ENCODE measurements at regions of chr19 and their contacts with region 1.

Region 1: GRCh38 chr19:39557441-39558151 is 17.6 kb upstream of the EID2 start:
- DNase-seq: no peak
- H3K4me3 Mint-ChIP-seq: peak overlapping the region; percentile 37
- H3K27ac Mint-ChIP-seq: peak overlapping the region; percentile 80
- H3K4me1 Mint-ChIP-seq: peaks cover 26% of the 10 kb centered on the region
- H3K27me3 Mint-ChIP-seq: no peaks in the 10 kb centered on the region

Region 2: DNA sequence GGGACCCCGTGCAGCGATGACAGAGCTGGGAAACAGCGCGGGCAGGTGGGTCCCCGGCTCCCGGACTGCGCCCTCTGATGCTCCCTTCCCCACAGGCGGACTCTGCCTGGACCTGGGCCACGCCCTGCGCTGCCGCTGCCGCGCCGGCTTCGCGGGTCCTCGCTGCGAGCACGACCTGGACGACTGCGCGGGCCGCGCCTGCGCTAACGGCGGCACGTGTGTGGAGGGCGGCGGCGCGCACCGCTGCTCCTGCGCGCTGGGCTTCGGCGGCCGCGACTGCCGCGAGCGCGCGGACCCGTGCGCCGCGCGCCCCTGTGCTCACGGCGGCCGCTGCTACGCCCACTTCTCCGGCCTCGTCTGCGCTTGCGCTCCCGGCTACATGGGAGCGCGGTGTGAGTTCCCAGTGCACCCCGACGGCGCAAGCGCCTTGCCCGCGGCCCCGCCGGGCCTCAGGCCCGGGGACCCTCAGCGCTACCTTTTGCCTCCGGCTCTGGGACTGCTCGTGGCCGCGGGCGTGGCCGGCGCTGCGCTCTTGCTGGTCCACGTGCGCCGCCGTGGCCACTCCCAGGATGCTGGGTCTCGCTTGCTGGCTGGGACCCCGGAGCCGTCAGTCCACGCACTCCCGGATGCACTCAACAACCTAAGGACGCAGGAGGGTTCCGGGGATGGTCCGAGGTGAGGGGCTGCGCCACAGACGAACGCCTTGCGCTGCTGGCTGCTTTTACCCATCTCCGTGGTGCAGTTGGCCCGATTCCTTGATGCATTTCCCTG is 50.5 kb before region 1 on chr19:
- CTCF ChIA-PET with region 1: no interaction called
- POLR2A ChIA-PET with region 1: no interaction called
- intact Hi-C with region 1: no loop called
- DNase-seq: peak; percentile 70
- H3K4me3 Mint-ChIP-seq: peak overlapping the region; percentile 73
- H3K27ac Mint-ChIP-seq: no peak overlapping the region
- H3K4me1 Mint-ChIP-seq: peaks cover 22% of the 10 kb centered on the region
- H3K27me3 Mint-ChIP-seq: peaks cover 40% of the 10 kb centered on the region

Region 3: GRCh38 chr19:39546599-39546998 is 11.0 kb before region 1 on chr19:
- CTCF ChIA-PET with region 1: interaction called, 10 read pairs
- POLR2A ChIA-PET with region 1: no interaction called
- intact Hi-C with region 1: no loop called
- DNase-seq: peak; percentile 34
- H3K4me3 Mint-ChIP-seq: no peak overlapping the region
- H3K27ac Mint-ChIP-seq: no peak overlapping the region
- H3K4me1 Mint-ChIP-seq: peaks cover 41% of the 10 kb centered on the region
- H3K27me3 Mint-ChIP-seq: no peaks in the 10 kb centered on the region

Region 4: GRCh38 chr19:39582891-39583625 is 25.5 kb after region 1 on chr19:
- CTCF ChIA-PET with region 1: interaction called, 3 read pairs
- POLR2A ChIA-PET with region 1: interaction called, 3 read pairs
- intact Hi-C with region 1: loop called (anchors 1 kb)
- DNase-seq: peak; percentile 52
- H3K4me3 Mint-ChIP-seq: no peak overlapping the region
- H3K27ac Mint-ChIP-seq: no peak overlapping the region
- H3K4me1 Mint-ChIP-seq: no peaks in the 10 kb centered on the region
- H3K27me3 Mint-ChIP-seq: peaks cover 39% of the 10 kb centered on the region

Region 5: DNA sequence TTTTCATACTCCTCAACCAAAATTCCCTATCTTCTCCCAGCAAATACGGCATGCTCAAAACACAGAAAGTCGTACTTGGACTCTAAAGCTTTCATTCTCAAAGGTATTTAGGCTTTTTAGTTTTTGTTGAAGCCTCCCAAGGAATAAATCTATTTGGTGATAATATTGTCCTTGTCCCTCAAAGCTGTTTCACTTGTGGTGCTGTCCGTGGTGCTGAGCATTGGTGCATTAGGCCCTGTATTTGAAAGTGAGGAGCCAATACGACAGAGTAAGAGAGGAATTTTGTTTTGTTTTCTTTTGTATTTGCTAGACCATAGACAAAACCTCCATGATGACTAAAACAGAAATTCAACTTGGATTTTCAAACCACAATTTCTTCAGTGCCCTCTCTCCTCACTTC is 41.5 kb after region 1 on chr19:
- CTCF ChIA-PET with region 1: no interaction called
- POLR2A ChIA-PET with region 1: no interaction called
- intact Hi-C with region 1: no loop called
- DNase-seq: peak; percentile 51
- H3K4me3 Mint-ChIP-seq: no peak overlapping the region
- H3K27ac Mint-ChIP-seq: no peak overlapping the region
- H3K4me1 Mint-ChIP-seq: peaks cover 2% of the 10 kb centered on the region
- H3K27me3 Mint-ChIP-seq: peaks cover 48% of the 10 kb centered on the region

Region 6: GRCh38 chr19:39631178-39631577 is 73.6 kb after region 1 on chr19:
- CTCF ChIA-PET with region 1: interaction called, 5 read pairs
- POLR2A ChIA-PET with region 1: no interaction called
- intact Hi-C with region 1: loop called (anchors 2 kb)
- DNase-seq: no peak
- H3K4me3 Mint-ChIP-seq: no peak overlapping the region
- H3K27ac Mint-ChIP-seq: no peak overlapping the region
- H3K4me1 Mint-ChIP-seq: no peaks in the 10 kb centered on the region
- H3K27me3 Mint-ChIP-seq: peaks cover 15% of the 10 kb centered on the region

Region 7: DNA sequence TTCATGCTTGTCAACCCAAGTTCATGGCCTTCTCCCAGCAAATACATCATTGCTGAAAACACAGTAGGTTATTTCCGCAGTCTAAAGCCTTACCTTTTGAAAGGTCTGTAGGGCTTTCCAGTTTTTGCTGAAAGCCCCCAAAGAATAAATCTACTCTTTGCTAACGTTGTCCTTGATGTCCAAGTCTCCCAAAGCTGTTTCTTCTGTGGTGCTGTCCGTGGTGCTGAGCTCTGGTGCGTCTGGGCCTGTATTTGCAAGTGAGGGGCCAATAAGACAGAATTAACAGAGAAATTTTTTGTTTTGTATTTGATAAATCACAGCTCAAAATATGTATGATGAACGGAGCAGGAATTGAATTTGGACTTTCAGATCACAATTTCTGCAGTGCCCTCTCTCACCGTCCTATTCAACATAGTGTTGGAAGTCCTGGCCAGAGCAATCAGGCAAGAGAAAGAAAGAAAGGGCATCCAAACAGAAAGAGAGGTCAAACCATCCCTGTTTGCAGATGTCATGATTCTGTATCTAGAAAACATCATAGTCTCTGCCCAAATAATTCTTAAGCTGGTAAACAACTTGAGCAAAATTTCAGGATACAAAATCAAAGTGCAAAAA is 88.3 kb after region 1 on chr19:
- CTCF ChIA-PET with region 1: no interaction called
- POLR2A ChIA-PET with region 1: no interaction called
- intact Hi-C with region 1: no loop called
- DNase-seq: peak; percentile 37
- H3K4me3 Mint-ChIP-seq: no peak overlapping the region
- H3K27ac Mint-ChIP-seq: no peak overlapping the region
- H3K4me1 Mint-ChIP-seq: no peaks in the 10 kb centered on the region
- H3K27me3 Mint-ChIP-seq: peaks cover 59% of the 10 kb centered on the region

Region 8: DNA sequence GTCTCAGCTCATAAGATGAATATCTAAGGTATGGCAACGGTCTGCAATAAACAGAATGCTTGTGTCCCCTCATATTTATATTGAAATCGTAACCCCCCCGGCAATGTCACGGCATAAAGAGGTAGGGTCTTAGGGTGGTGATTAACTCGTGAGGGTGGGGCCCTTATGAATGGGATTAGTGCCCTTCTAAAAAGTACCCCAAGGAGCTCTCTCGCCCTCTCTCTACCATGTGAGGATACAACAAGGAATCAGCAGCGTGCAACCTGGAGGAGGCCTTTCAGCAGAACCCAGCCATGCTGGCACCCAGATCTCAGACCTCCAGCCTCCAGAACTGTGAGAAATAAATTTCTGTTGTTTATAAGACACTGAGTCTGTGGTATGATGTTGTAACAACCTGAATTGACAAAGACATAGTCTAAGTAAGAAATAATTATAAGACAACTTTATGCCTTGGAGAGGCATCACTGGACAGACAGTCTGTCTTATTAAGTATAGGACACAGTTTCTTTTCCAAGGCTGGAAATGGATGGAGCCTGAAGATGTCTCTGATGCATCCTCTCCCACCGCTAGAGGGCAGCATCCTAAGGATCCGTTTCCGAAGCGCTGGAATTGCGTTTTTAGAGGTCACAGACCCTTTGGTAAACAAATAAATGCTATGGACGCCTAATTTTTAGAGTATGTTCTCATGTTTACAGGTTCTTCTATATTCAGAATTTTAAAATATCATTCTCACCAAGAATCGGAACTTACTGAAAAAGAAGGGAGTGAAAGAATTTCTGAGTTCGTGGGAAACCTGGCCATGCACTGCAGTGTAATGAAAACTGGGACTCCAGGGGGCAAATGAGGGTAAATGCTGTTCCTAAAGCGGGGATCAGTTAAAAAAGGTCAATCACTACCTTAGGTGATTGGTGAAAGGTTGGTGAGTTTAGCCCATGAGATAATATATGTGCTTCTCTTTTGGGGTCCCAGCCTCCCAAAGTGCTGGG is 207.8 kb after region 1 on chr19:
- CTCF ChIA-PET with region 1: no interaction called
- POLR2A ChIA-PET with region 1: no interaction called
- intact Hi-C with region 1: loop called (anchors 5 kb)
- DNase-seq: peak; percentile 41
- H3K4me3 Mint-ChIP-seq: no peak overlapping the region
- H3K27ac Mint-ChIP-seq: no peak overlapping the region
- H3K4me1 Mint-ChIP-seq: peaks cover 3% of the 10 kb centered on the region
- H3K27me3 Mint-ChIP-seq: peaks cover 7% of the 10 kb centered on the region

Region 9: GRCh38 chr19:39846176-39846677 is 288.6 kb after region 1 on chr19 and contains the start of gene FBL:
- CTCF ChIA-PET with region 1: no interaction called
- POLR2A ChIA-PET with region 1: no interaction called
- intact Hi-C with region 1: loop called (anchors 10 kb)
- DNase-seq: peak; percentile 98
- H3K4me3 Mint-ChIP-seq: peak within 1 kb of the TSS; percentile 94
- H3K27ac Mint-ChIP-seq: peak within 1 kb of the TSS; percentile 90
- H3K4me1 Mint-ChIP-seq: peaks cover 45% of the 10 kb centered on the region
- H3K27me3 Mint-ChIP-seq: no peaks in the 10 kb centered on the region
- total RNA-seq, gene FBL: 579 to 589 TPM